CD8-positive, alpha-beta T cell (primary cell): ENCODE measurements at regions of chr7 and their contacts with region 1.

Region 1: GRCh38 chr7:142811154-142811737 is 40.5 kb downstream of the PRSS2 start:
- DNase-seq: peak in 4 of 9 experiments; percentile 41 to 87 (median 72)
- ATAC-seq: no peak
- H3K4me3 ChIP-seq: no peak overlapping the region
- H3K4me3 Mint-ChIP-seq: peak overlapping the region; percentile 26
- H3K27ac ChIP-seq: peak overlapping the region; percentile 86 to 99
- H3K27ac Mint-ChIP-seq: peak overlapping the region; percentile 100
- H3K4me1 ChIP-seq: peaks cover 71% of the 10 kb centered on the region
- H3K4me1 Mint-ChIP-seq: peaks cover 83% of the 10 kb centered on the region
- H3K27me3 ChIP-seq: no peaks in the 10 kb centered on the region
- H3K27me3 Mint-ChIP-seq: no peaks in the 10 kb centered on the region
- CTCF ChIP-seq: peak; percentile 80

Region 2: GRCh38 chr7:142301923-142302550 is 509.2 kb before region 1 on chr7:
- CTCF ChIA-PET with region 1: interaction called, 27 read pairs
- POLR2A ChIA-PET with region 1: interaction called, 14 read pairs
- intact Hi-C with region 1: loop called (anchors 1 to 5 kb)
- DNase-seq: peak in 2 of 9 experiments; percentile 26 to 33
- ATAC-seq: no peak
- H3K4me3 ChIP-seq: no peak overlapping the region
- H3K4me3 Mint-ChIP-seq: no peak overlapping the region
- H3K27ac ChIP-seq: no peak overlapping the region
- H3K27ac Mint-ChIP-seq: no peak overlapping the region
- H3K4me1 ChIP-seq: peaks cover 16% of the 10 kb centered on the region
- H3K4me1 Mint-ChIP-seq: peaks cover 38% of the 10 kb centered on the region
- H3K27me3 ChIP-seq: peaks cover 0 to 4% of the 10 kb centered on the region in 2 experiments
- H3K27me3 Mint-ChIP-seq: peaks cover 16% of the 10 kb centered on the region
- CTCF ChIP-seq: peak; percentile 38

Region 3: GRCh38 chr7:142496545-142497041 is 314.7 kb before region 1 on chr7:
- CTCF ChIA-PET with region 1: interaction called, 3 read pairs
- POLR2A ChIA-PET with region 1: interaction called, 5 read pairs
- intact Hi-C with region 1: loop called in 1 of 2 experiments (anchors 5 kb)
- DNase-seq: peak in 2 of 9 experiments; percentile 46 to 67
- ATAC-seq: peak; percentile 56
- H3K4me3 ChIP-seq: no peak overlapping the region
- H3K4me3 Mint-ChIP-seq: peak overlapping the region; percentile 51
- H3K27ac ChIP-seq: no peak overlapping the region
- H3K27ac Mint-ChIP-seq: peak overlapping the region; percentile 78
- H3K4me1 ChIP-seq: peaks cover 25% of the 10 kb centered on the region
- H3K4me1 Mint-ChIP-seq: peaks cover 57% of the 10 kb centered on the region
- H3K27me3 ChIP-seq: no peaks in the 10 kb centered on the region
- H3K27me3 Mint-ChIP-seq: no peaks in the 10 kb centered on the region
- CTCF ChIP-seq: peak; percentile 74

Region 4: GRCh38 chr7:142603870-142604448 is 207.3 kb before region 1 on chr7:
- CTCF ChIA-PET with region 1: interaction called, 13 read pairs
- POLR2A ChIA-PET with region 1: interaction called, 3 read pairs
- intact Hi-C with region 1: loop called in 1 of 2 experiments (anchors 1 kb)
- DNase-seq: peak; percentile 5 to 70 (median 48)
- ATAC-seq: peak; percentile 67
- H3K4me3 ChIP-seq: no peak overlapping the region
- H3K4me3 Mint-ChIP-seq: no peak overlapping the region
- H3K27ac ChIP-seq: no peak overlapping the region
- H3K27ac Mint-ChIP-seq: peak overlapping the region; percentile 28
- H3K4me1 ChIP-seq: no peaks in the 10 kb centered on the region
- H3K4me1 Mint-ChIP-seq: peaks cover 3% of the 10 kb centered on the region
- H3K27me3 ChIP-seq: no peaks in the 10 kb centered on the region
- H3K27me3 Mint-ChIP-seq: peaks cover 2% of the 10 kb centered on the region
- CTCF ChIP-seq: peak; percentile 68

Region 5: GRCh38 chr7:142745091-142745635 is 66.1 kb before region 1 on chr7:
- CTCF ChIA-PET with region 1: no interaction called
- POLR2A ChIA-PET with region 1: no interaction called
- intact Hi-C with region 1: no loop called
- DNase-seq: no peak
- ATAC-seq: no peak
- H3K4me3 ChIP-seq: no peak overlapping the region
- H3K4me3 Mint-ChIP-seq: no peak overlapping the region
- H3K27ac ChIP-seq: no peak overlapping the region
- H3K27ac Mint-ChIP-seq: no peak overlapping the region
- H3K4me1 ChIP-seq: no peaks in the 10 kb centered on the region
- H3K4me1 Mint-ChIP-seq: peaks cover 4% of the 10 kb centered on the region
- H3K27me3 ChIP-seq: no peaks in the 10 kb centered on the region
- H3K27me3 Mint-ChIP-seq: no peaks in the 10 kb centered on the region
- CTCF ChIP-seq: no peak

Region 6: GRCh38 chr7:142782922-142783900 is 28.0 kb before region 1 on chr7:
- CTCF ChIA-PET with region 1: interaction called, 490 read pairs
- POLR2A ChIA-PET with region 1: interaction called, 2,372 read pairs
- intact Hi-C with region 1: loop called (anchors 1 kb)
- DNase-seq: peak; percentile 57 to 91 (median 80)
- ATAC-seq: peak; percentile 34
- H3K4me3 ChIP-seq: peak overlapping the region; percentile 37 to 44
- H3K4me3 Mint-ChIP-seq: peak overlapping the region; percentile 79
- H3K27ac ChIP-seq: peak overlapping the region; percentile 44 to 50
- H3K27ac Mint-ChIP-seq: peak overlapping the region; percentile 99
- H3K4me1 ChIP-seq: peaks cover 8% of the 10 kb centered on the region
- H3K4me1 Mint-ChIP-seq: peaks cover 12% of the 10 kb centered on the region
- H3K27me3 ChIP-seq: no peaks in the 10 kb centered on the region
- H3K27me3 Mint-ChIP-seq: no peaks in the 10 kb centered on the region
- CTCF ChIP-seq: peak; percentile 65

Region 7: GRCh38 chr7:142997456-142997989 is 186.3 kb after region 1 on chr7:
- CTCF ChIA-PET with region 1: interaction called, 12 read pairs
- POLR2A ChIA-PET with region 1: no interaction called
- intact Hi-C with region 1: loop called in 1 of 2 experiments (anchors 2 kb)
- DNase-seq: no peak
- ATAC-seq: no peak
- H3K4me3 ChIP-seq: no peak overlapping the region
- H3K4me3 Mint-ChIP-seq: no peak overlapping the region
- H3K27ac ChIP-seq: no peak overlapping the region
- H3K27ac Mint-ChIP-seq: no peak overlapping the region
- H3K4me1 ChIP-seq: no peaks in the 10 kb centered on the region
- H3K4me1 Mint-ChIP-seq: no peaks in the 10 kb centered on the region
- H3K27me3 ChIP-seq: no peaks in the 10 kb centered on the region
- H3K27me3 Mint-ChIP-seq: no peaks in the 10 kb centered on the region
- CTCF ChIP-seq: no peak

Region 8: GRCh38 chr7:143287935-143288826 is 476.9 kb after region 1 on chr7 and contains the start of gene CASP2:
- CTCF ChIA-PET with region 1: interaction called, 3 read pairs
- POLR2A ChIA-PET with region 1: no interaction called
- intact Hi-C with region 1: loop called in 1 of 2 experiments (anchors 10 kb)
- DNase-seq: peak; percentile 96 to 100 (median 99)
- ATAC-seq: peak; percentile 96
- H3K4me3 ChIP-seq: peak within 1 kb of the TSS; percentile 91 to 95
- H3K4me3 Mint-ChIP-seq: peak within 1 kb of the TSS; percentile 93
- H3K27ac ChIP-seq: peak within 1 kb of the TSS; percentile 64 to 72
- H3K27ac Mint-ChIP-seq: peak within 1 kb of the TSS; percentile 91
- H3K4me1 ChIP-seq: peaks cover 40% of the 10 kb centered on the region
- H3K4me1 Mint-ChIP-seq: peaks cover 53% of the 10 kb centered on the region
- H3K27me3 ChIP-seq: no peaks in the 10 kb centered on the region
- H3K27me3 Mint-ChIP-seq: no peaks in the 10 kb centered on the region
- CTCF ChIP-seq: peak; percentile 31
- total RNA-seq, gene CASP2: 16.0 to 19.1 TPM